Gastrocnemius medialis (tissue), 4 donors: ENCODE measurements at regions of chr22 and their contacts with region 1.

Region 1: GRCh38 chr22:21938071-21938822 is 14.4 kb downstream of the PPM1F start:
- DNase-seq: peak; percentile 84 to 91
- ATAC-seq: peak; percentile 88 to 90
- H3K4me3 ChIP-seq: peak overlapping the region; percentile 53 to 68 (median 62)
- H3K27ac ChIP-seq: peak overlapping the region; percentile 79 to 90 (median 86)
- H3K4me1 ChIP-seq: peaks cover 55 to 61% of the 10 kb centered on the region in 2 donors
- H3K27me3 ChIP-seq: no peaks in the 10 kb centered on the region
- CTCF ChIP-seq: peak; percentile 95 to 100 (median 99)
- POLR2A ChIP-seq: no peak

Region 2: DNA sequence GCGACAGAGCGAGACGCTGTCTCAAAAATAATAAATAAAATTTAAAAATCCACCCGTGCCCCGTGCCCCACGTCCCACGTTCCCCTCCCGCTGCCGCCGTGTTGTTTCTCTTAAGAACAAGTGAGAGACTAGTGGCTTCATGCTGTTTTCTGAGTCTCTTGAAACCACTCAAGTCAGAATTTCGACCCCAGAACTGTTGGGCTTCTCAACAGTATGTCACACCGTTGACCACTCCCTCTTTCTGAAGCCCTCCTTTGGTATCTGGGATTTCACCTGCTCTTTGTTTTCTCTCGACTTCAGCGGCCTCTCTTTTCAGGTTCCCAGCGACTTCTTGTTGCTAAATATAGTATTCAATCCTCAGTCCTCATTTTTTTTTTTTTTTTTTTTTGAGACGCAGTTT is 271.5 kb before region 1 on chr22:
- in situ Hi-C with region 1: no loop called
- intact Hi-C with region 1: loop called (anchors 5 kb)
- DNase-seq: no peak
- ATAC-seq: no peak
- H3K4me3 ChIP-seq: peak overlapping the region; percentile 76 to 87 (median 78)
- H3K27ac ChIP-seq: peak overlapping the region; percentile 86 to 98 (median 93)
- H3K4me1 ChIP-seq: peaks cover 0 to 12% of the 10 kb centered on the region in 2 donors
- H3K27me3 ChIP-seq: no peaks in the 10 kb centered on the region
- CTCF ChIP-seq: no peak
- POLR2A ChIP-seq: no peak

Region 3: DNA sequence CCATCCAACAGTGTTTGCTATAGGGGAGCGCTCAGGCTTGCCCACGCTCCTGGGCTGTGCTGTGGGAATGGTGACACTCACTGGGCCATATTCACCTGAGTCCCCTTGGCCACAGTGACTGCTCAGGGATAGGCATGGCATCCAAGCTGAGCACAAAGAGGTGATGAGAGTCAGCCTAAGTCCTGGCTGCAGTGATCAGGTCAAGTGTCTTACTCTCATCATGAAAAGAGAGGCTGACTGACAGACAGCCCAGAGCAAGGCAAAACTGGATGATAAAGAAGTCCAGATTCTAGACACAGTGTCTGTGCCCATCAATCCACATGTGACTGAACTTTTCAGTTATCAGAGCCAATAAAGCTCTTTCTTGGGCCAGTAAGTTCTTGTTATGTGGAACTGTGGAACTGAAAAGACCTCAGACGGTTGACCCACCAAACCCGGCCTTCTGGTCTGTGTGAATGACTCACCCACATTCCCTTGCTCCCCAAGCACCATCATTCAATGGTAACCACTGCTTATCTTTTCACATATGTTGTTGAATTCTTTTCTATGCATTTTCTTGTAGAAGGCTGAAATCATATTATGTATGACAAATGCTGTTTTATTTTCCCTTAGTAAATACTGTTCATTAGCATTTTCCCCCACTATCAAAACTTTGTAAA is 159.4 kb before region 1 on chr22:
- in situ Hi-C with region 1: no loop called
- intact Hi-C with region 1: loop called (anchors 10 kb)
- DNase-seq: no peak
- ATAC-seq: no peak
- H3K4me3 ChIP-seq: no peak overlapping the region
- H3K27ac ChIP-seq: no peak overlapping the region
- H3K4me1 ChIP-seq: peaks cover 5 to 8% of the 10 kb centered on the region in 2 donors
- H3K27me3 ChIP-seq: no peaks in the 10 kb centered on the region
- CTCF ChIP-seq: no peak
- POLR2A ChIP-seq: no peak

Region 4: DNA sequence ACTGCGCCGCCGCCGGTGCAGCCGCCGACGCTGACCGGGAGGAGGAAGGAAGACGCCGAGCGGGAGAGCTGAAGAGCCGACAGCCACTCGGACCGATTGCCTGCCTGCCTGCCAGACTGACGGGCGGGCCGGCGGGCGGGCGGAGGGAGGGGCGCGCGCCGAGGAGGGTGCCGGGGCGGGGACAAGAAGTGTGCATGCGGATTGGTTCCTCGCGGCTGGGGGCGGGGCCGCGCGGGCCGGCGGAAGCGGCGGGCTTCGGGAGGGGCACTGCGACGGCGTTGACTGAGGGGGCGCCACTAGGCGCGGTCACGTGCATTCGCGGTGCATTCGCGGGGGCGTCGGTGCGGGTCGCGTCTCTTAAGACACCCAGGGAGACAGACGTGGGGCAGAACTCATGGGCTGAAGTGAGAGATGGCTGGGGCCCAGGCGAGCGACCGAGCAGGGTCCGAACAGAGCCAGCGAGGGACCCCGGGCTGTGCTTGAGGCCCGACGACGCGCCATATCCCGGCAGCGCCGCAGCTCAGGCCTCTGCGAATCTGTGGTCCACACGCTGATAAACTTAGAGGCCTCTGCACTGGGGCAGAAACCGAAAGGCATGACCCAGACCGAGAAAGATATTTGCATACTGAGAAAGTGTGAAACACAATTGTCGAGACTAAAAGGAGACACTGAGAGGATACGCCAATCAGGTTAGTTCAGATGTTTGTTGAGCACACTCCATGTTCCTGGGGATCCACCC is 70.5 kb before region 1 on chr22 and contains the start of gene MAPK1:
- in situ Hi-C with region 1: no loop called
- intact Hi-C with region 1: loop called (anchors 5 kb)
- DNase-seq: peak; percentile 91
- ATAC-seq: peak; percentile 91 to 95
- H3K4me3 ChIP-seq: peak within 1 kb of the TSS; percentile 83 to 95 (median 90)
- H3K27ac ChIP-seq: peak within 1 kb of the TSS; percentile 86 to 93 (median 90)
- H3K4me1 ChIP-seq: peaks cover 35 to 43% of the 10 kb centered on the region in 2 donors
- H3K27me3 ChIP-seq: no peaks in the 10 kb centered on the region
- CTCF ChIP-seq: peak in 4 of 5 experiments; percentile 26 to 49 (median 42)
- POLR2A ChIP-seq: peak; percentile 94 to 95
- total RNA-seq, gene MAPK1: 39.8 to 79.5 (median 57.2) TPM

Region 5: DNA sequence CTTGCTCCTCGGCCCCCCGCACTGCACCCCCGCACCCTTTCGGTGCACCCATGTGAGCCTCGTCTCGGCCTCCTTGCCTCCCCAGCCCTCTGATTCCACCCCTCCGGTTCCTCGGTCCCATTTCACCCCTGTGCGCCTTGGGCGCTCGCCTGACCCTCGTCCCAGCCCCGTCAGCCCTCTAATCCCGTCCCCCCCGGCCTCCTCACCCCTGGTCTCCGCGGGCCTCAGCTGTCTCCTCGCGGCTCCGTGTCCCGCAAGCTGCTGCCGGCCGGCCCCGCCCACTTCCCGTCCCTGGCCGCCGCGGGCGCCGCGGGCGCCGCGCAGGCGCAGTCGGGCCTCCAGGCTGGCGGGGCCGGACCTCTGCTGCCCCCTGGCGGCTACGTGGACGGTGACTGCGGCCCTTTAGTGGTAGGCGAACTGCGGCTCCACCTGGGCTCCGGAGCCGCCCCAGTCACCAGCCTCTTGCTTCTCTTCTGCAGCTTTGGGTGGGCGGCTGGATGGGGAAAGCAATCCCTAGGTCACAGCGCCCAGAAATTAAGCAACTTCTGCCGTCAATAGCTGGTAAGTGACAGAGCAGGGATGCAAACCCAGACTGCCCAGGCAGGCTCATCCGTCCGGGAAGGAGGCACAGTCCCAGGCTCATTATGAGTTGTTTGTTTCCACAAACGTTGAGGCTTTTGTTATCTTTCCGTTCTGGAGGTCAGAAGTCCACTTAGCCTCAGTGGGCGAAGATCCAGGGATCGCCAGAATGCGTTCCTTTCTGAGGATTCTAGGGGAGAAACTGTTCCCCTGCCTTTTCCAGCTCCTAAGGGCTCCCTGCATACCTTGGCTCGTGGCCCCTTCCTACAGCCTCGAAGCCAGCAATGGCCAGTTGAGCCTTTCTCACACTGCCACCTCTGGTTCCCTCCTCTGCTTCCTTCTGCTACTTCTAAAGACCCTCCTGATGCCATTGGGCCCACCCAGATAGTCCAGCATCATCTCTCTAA is 14.6 kb after region 1 on chr22 and contains the start of gene PPM1F:
- in situ Hi-C with region 1: no loop called
- intact Hi-C with region 1: loop called (anchors 1 kb)
- DNase-seq: peak; percentile 75
- ATAC-seq: peak; percentile 74 to 89
- H3K4me3 ChIP-seq: peak within 1 kb of the TSS; percentile 58 to 79 (median 75)
- H3K27ac ChIP-seq: peak within 1 kb of the TSS; percentile 61 to 85 (median 78)
- H3K4me1 ChIP-seq: peaks cover 26 to 28% of the 10 kb centered on the region in 2 donors
- H3K27me3 ChIP-seq: no peaks in the 10 kb centered on the region
- CTCF ChIP-seq: peak; percentile 80 to 99 (median 99)
- POLR2A ChIP-seq: peak; percentile 37 to 41
- total RNA-seq, gene PPM1F: 10.2 to 13.8 (median 11.0) TPM